Tibial artery (tissue), 4 donors: ENCODE measurements at regions of chr11 and their contacts with region 1.

Region 1: GRCh38 chr11:12274558-12275197 is 102.7 kb upstream of the PARVA start:
- DNase-seq: peak; percentile 11 to 49
- H3K4me3 ChIP-seq: no peak overlapping the region
- H3K27ac ChIP-seq: no peak overlapping the region
- H3K4me1 ChIP-seq: peaks cover 0 to 13% (median 9%) of the 10 kb centered on the region in 4 donors
- H3K27me3 ChIP-seq: no peaks in the 10 kb centered on the region
- CTCF ChIP-seq: no peak

Region 2: DNA sequence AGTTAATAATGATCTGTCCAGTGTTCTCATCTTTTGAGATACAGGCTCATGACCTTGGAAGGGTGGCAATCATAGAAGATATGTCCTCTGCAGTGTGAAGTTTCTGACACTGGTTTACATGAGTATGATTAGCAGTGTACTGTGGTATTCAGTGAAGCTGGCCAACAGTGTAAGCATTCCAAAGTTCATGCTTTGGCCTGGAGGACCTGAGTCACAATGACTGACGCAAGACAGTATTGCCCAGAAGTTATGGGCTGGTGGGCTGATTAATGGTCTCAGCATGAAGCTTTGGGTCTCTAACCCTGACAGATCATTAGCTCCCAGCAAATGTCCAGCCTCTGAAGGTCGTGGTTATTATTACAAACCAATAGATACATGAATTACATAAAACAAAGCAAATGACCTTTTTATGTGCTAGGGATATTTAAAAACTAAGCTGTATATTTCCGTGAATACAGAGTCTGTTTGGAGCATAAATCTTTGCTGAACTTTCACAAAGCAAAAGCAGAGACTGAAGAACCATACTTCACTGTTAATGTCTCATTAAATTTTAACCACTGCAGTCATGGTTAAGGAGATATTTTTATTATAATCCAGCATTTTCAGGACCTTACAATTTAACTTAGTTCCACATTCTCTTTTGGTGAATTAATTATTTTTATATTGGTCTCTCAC is 461.3 kb before region 1 on chr11:
- intact Hi-C with region 1: loop called (anchors 10 kb)
- DNase-seq: peak; percentile 67 to 78
- H3K4me3 ChIP-seq: no peak overlapping the region
- H3K27ac ChIP-seq: peak overlapping the region; percentile 45 to 62
- H3K4me1 ChIP-seq: peaks cover 0 to 32% (median 8%) of the 10 kb centered on the region in 4 donors
- H3K27me3 ChIP-seq: no peaks in the 10 kb centered on the region
- CTCF ChIP-seq: no peak

Region 3: DNA sequence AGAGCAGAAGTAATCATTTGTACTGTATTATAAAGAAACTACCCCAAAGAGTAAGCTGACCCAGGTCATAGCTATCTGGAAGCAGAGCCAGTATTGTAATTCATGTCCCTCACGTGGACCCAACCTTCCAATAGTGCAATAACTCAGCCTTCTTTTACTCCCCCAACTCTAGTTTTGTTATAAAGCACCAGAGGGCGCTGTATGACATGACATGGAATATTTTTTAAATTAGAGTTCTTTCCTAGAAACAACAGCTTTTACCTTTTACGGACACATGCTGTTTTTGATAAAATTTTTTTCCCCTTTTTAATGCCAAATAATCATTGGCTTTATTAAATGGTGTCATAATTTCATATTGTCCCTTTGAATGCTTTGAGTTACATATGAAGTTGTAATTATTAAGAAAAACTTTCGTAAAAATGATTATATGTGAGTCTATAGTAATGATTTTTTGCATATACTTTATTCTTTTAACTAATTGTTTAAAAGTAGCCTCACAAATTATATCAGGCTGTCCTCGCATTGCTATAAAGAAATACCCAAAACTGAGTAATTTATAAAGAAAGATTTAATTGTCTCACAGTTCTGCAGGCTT is 343.1 kb before region 1 on chr11:
- intact Hi-C with region 1: loop called (anchors 10 kb)
- DNase-seq: no peak
- H3K4me3 ChIP-seq: no peak overlapping the region
- H3K27ac ChIP-seq: no peak overlapping the region
- H3K4me1 ChIP-seq: no peaks in the 10 kb centered on the region
- H3K27me3 ChIP-seq: no peaks in the 10 kb centered on the region
- CTCF ChIP-seq: peak; percentile 56 to 79

Region 4: DNA sequence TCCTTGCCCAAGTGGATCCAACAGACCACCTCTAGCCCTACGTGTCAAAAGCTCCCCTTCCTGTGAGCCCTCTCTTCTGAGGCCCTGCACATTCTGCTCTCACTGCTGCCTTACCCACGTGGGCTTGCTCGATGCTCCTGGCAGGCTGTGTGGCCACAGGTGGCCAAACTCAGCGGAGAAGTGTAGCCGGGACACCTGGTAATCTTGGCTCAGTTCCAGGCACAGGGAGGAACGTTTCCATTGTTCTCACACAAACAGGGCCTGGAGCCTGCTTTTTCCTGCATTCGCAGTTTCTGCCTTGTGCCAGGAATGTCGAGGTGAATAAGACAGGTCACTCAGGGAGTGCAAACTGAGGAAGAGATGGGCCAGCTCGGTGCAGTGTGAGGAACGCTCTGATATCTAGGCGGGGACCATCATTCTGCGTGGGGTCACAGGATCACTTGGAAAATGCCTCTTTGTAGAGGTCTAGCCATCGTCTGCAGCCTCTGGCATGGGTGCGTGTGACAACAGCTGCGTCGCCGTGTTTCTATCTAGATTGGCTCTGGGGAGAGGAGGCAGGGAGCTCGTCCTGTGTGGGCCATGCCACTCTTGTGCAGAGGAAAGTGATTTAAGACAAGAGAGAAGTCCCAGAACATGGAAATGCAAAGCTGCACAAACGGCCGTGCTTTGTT is 25.0 kb before region 1 on chr11:
- intact Hi-C with region 1: no loop called
- DNase-seq: no peak
- H3K4me3 ChIP-seq: no peak overlapping the region
- H3K27ac ChIP-seq: peak overlapping the region in 1 of 2 donors; percentile 10
- H3K4me1 ChIP-seq: peaks cover 0 to 48% (median 29%) of the 10 kb centered on the region in 4 donors
- H3K27me3 ChIP-seq: no peaks in the 10 kb centered on the region
- CTCF ChIP-seq: no peak